ENCODE measurements at regions of chr19 and their contacts with region 1.

Region 1: GRCh38 chr19:13718733-13719132 is 45.6 kb upstream of the MRI1 start:
- DNase-seq: peak; percentile 36
- ATAC-seq: peak; percentile 55
- H3K4me3 Mint-ChIP-seq: no peak overlapping the region
- H3K27ac Mint-ChIP-seq: no peak overlapping the region
- H3K4me1 Mint-ChIP-seq: no peaks in the 10 kb centered on the region
- H3K27me3 Mint-ChIP-seq: peaks cover 4% of the 10 kb centered on the region; the same call in 1 of the 2 replicates
- CTCF ChIP-seq: no peak

Region 2: DNA sequence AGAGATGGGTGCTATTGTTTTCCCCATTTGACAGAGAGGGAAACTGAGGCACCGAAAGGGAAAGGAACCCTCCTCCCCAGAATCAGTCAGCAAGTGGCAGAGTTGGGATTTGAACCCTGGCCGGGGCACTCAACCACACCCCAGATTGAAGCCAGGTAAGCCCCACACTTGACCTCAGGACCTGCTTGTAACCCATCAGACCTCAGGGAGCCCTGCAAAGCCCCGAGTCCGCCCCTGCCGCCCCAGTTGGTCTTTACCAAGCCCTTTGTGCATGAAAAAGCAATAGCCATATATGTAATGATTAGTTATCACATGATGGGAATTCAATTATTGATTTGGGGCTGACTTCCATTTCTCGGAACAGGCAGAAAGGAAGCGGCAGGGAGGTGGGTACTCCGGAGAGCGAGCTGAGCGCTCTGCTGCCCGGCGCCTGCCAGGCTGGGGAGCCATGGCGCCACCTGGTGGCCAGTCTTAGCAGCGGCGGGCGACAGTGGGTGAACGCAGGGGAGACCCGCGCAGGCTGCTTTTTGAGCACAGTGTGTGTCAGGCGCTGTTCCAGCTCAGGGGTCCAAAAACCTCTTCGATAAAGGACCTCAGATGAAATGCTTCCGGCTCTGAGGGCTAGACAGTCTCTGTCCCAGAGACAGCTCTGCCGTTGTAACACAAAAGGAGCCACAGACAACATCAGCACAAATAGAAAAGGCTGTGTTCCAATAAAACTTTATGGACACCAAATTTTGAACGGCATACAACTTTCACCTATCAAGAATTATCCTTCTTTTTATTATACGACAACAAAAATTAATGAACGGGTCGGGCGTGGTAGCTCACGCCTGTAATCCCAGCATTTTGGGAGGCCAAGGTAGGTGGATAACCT is 129.5 kb before region 1 on chr19:
- CTCF ChIA-PET with region 1: interaction called, 17 read pairs
- POLR2A ChIA-PET with region 1: no interaction called
- DNase-seq: peak; percentile 90
- ATAC-seq: peak; percentile 97
- H3K4me3 Mint-ChIP-seq: no peak overlapping the region
- H3K27ac Mint-ChIP-seq: no peak overlapping the region
- H3K4me1 Mint-ChIP-seq: no peaks in the 10 kb centered on the region
- H3K27me3 Mint-ChIP-seq: peaks cover 2% of the 10 kb centered on the region
- CTCF ChIP-seq: peak; percentile 95

Region 3: GRCh38 chr19:13604902-13605586 is 113.7 kb before region 1 on chr19:
- CTCF ChIA-PET with region 1: interaction called, 69 read pairs
- POLR2A ChIA-PET with region 1: no interaction called
- DNase-seq: no peak
- ATAC-seq: peak; percentile 63
- H3K4me3 Mint-ChIP-seq: no peak overlapping the region
- H3K27ac Mint-ChIP-seq: no peak overlapping the region
- H3K4me1 Mint-ChIP-seq: peaks cover 19% of the 10 kb centered on the region
- H3K27me3 Mint-ChIP-seq: no peaks in the 10 kb centered on the region
- CTCF ChIP-seq: no peak

Region 4: DNA sequence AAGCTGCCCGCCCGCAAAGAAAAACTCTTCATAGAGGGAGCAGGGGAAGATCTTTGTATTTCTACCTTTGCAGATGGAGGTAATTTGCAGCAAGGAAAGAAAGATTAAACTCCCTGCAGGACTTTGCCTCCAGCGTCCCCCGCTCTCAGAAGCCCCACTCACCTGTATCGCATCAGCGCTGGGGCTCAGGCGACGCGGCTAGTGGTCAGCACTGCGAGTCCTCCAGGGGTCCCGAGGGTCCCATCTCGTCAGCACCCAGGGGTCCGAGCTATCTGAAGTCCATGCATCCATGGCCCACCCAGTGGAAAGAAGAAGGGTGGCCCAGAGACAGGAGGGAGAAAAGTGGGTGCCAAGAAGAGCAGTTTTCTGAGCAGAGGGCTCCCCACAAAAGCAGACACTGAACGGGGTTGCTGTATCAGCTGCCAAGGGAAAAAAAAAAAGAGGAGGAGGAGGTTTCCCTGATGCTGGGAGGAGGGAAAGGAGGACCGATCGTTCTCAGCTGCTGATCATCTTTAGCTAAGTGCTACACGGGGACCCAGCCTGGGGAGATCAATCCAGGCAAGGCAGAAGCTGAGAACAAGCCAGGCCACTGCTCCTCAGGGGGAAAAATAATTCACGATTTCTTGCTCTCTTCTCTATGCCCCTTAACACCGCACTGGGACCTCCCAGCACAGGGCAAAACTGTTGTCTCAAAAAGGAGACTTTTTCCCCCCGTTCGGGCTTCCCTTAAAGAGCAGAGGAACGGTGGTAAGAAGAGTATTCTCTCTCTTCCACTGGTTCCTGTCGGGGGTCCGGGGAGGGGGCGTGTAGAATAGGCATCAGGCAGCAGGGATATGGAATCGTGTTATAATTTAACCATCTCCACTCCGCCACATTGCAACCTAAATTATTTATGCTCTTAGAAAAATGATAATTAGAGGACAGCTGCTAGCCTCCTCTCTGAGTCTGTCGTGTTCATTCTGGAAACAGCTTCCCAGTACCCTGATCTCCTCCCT is 94.7 kb before region 1 on chr19:
- CTCF ChIA-PET with region 1: interaction called, 10 read pairs
- POLR2A ChIA-PET with region 1: no interaction called
- DNase-seq: peak; percentile 14
- ATAC-seq: 0 out of 2 replicates have a peak, but pooled peaks have one; percentile 12
- H3K4me3 Mint-ChIP-seq: peak overlapping the region; percentile 57
- H3K27ac Mint-ChIP-seq: peak overlapping the region; percentile 45
- H3K4me1 Mint-ChIP-seq: peaks cover 54% of the 10 kb centered on the region
- H3K27me3 Mint-ChIP-seq: peaks cover 5% of the 10 kb centered on the region; the same call in 1 of the 2 replicates
- CTCF ChIP-seq: no peak

Region 5: DNA sequence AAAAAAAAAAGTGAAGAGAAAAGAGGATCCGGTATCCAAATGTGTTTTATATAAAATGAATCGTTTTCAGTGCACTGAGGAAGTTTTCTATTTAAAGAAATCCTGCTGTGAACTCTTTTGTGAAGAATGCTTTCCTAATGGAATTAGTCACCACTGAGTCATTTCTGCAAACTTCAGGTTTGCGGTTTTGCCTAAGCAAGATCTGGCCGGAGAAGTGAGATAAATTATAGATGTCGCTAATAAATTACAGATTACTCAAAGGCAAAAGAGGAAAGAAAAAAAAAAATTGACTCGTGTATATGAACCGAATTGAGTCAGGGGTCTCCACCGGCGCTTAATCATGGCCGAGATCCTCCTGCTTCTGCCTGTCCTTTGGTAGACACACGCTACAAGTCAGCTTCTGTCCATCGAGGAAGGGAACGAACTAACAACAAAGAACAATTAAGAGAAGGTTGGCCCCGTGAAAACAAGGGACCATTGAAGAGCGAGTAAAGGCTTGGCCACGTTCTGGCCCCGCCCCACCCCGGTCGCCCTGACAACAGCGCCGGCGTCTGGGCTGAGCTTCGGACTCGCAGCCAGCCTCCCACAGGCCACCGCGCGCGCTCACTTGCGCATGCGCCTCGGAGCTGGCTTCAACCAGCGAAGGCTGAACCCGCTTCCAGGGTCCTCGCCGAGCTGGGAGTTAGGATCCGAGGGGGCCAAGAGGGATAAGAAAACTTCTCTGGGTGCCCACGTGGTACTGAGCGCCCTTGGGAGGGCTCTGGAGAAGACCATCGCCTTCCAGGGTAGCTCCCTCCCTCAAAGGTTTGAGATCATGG is 12.6 kb after region 1 on chr19:
- CTCF ChIA-PET with region 1: interaction called, 32 read pairs
- POLR2A ChIA-PET with region 1: no interaction called
- DNase-seq: peak; percentile 95
- ATAC-seq: peak; percentile 100
- H3K4me3 Mint-ChIP-seq: peak overlapping the region; percentile 62
- H3K27ac Mint-ChIP-seq: peak overlapping the region; percentile 91
- H3K4me1 Mint-ChIP-seq: peaks cover 12% of the 10 kb centered on the region
- H3K27me3 Mint-ChIP-seq: no peaks in the 10 kb centered on the region; the same call in 1 of the 2 replicates
- CTCF ChIP-seq: no peak

Measured in WTC11 (cell line).